HepG2 (cell line): ENCODE measurements at regions of chr15 and their contacts with region 1.

Region 1: DNA sequence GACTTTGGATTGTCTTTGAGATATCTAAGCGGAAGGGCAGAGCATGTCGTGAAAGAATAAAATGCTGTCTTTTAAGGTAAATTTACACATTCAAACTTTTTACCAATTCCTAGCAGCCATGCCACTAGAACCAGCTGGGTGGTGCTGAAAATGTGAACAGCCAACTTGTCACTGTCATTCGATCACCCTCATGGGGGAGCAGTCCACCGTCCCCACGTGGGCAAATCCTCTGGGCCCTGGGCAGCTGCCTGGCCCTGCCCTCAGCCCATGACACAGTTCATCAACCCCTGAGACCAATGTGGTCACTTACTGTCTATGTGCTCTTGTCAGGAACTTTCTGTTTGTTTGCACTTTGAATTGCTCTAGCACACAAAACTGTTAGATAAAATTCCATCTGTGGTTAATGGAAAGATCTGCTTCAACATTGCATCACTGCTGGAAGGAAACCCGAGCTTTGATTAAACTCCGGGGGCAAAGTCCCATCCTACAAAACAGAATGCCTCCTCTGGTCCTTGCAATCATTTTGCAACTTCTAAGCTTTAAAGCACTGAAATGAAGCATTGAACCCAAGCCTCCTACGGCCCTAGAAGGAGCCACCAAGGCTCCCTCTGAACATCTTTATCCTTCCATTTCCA is 50.1 kb downstream of the PCSK6 start:
- DNase-seq: peak; percentile 99
- ATAC-seq: peak; percentile 96
- H3K4me3 ChIP-seq: peak overlapping the region in 2 of 3 experiments; percentile 14 to 46; a peak in 2 of 6 replicates
- H3K27ac ChIP-seq: peak overlapping the region; percentile 93
- H3K4me1 ChIP-seq: peaks cover 77% of the 10 kb centered on the region
- H3K27me3 ChIP-seq: no peaks in the 10 kb centered on the region
- CTCF ChIP-seq: peak; percentile 79
- EP300 ChIP-seq: peak; percentile 88 to 99
- POLR2A ChIP-seq: peak; percentile 39 to 75; a peak in 3 of 4 replicates
- RAD21 ChIP-seq: peak; percentile 64

Region 2: DNA sequence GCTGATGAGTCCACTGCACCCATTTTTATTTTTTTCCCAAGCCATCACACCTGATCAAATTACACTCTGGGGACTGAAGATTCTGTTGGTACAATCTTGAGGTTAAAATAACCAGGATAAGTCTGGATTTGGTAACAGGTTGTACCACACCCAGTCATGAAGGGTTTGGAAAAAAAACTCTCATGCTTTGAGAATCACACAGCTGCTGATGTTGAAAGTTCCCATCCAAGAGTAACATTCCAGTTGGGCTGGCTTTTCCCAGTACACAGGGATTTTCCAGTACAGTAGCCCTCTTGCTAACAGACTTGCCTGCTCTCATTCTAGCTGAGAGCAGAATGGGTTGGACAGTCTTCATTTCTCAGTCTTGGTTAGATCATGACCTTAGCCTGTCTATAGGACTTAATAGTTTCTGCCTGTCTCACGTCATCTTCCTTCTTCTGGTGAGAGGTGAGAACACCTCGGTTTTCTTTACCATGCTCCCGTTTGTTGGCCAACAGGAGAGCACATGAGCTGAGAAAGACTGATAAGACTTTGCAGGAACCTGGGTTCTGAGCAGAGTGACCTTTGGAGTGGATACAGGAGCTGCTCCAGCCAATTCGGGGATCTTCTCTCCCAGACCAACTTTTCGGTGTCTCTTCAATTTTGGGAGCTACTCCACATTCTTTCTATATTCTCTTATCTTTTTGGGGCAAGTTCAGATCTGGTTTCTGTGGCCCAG is 1406.1 kb before region 1 on chr15:
- CTCF ChIA-PET with region 1: no interaction called
- POLR2A ChIA-PET with region 1: no interaction called
- in situ Hi-C with region 1: no loop called
- intact Hi-C with region 1: no loop called
- DNase-seq: no peak
- ATAC-seq: no peak
- H3K4me3 ChIP-seq: no peak overlapping the region
- H3K27ac ChIP-seq: no peak overlapping the region
- H3K4me1 ChIP-seq: no peaks in the 10 kb centered on the region
- H3K27me3 ChIP-seq: peaks cover 0 to 2% of the 10 kb centered on the region in 2 experiments; a peak in 3 of 5 replicates
- CTCF ChIP-seq: no peak
- EP300 ChIP-seq: no peak
- POLR2A ChIP-seq: no peak
- RAD21 ChIP-seq: no peak

Region 3: DNA sequence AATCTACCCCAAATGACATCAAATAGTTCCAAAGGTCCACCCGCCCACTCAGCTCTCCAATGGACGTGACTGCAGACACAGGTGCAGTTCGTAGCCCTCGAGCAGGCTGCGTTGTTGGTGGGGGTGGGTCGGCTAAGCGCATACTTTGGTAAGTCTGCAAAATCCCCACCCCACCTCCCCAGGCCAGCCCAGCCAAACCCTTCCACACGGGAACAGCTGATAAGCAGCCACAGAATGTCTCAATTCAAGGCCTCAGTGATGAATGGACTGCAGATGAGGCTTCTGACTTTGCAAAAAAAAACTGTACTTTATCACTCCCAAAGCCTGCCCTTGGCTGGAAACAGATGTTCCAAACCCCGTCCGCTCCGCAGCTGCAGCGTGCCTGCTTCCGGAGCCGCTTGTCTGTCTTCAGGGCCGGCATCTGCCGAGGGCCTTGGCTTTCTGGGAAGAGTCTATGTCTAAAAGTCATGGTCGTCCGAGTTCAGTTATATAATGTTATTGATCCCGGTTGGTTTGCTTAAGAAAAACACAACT is 11.9 kb after region 1 on chr15:
- CTCF ChIA-PET with region 1: no interaction called
- POLR2A ChIA-PET with region 1: interaction called, 32 read pairs
- in situ Hi-C with region 1: no loop called
- intact Hi-C with region 1: loop called (anchors 1 kb)
- DNase-seq: no peak
- ATAC-seq: no peak
- H3K4me3 ChIP-seq: no peak overlapping the region; a peak in 1 of 6 replicates
- H3K27ac ChIP-seq: peak overlapping the region; percentile 72
- H3K4me1 ChIP-seq: peaks cover 89% of the 10 kb centered on the region
- H3K27me3 ChIP-seq: no peaks in the 10 kb centered on the region
- CTCF ChIP-seq: no peak
- EP300 ChIP-seq: 0 out of 4 replicates have a peak, but pooled peaks of 1 of the 2 experiments have one; percentile 24
- POLR2A ChIP-seq: no peak
- RAD21 ChIP-seq: no peak

Region 4: DNA sequence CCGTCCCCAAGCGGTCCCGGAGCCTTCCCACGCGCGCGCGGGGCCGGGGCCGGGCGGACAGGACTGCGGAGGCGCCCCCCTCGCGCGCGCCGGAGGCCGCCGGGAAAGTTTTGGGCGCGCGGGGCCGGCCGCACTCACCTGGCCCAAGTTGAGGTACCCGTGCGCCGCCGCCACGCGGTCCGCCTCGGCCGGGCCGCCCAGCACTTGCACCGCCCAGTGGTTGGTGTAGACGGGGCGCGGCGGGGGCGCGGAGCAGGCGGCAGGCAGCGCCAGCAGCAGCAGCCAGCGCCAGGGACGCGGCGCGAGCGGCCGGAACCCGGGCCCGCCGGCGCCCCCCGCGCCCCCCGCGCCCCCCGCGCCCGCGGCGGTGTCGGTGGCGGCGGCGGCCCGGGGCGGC is 49.8 kb after region 1 on chr15:
- CTCF ChIA-PET with region 1: no interaction called
- POLR2A ChIA-PET with region 1: interaction called, 56 read pairs
- in situ Hi-C with region 1: loop called (anchors 5 kb)
- intact Hi-C with region 1: loop called (anchors 1 kb)
- DNase-seq: no peak
- ATAC-seq: peak; percentile 43
- H3K4me3 ChIP-seq: peak overlapping the region; percentile 62 to 83 (median 83); a peak in 4 of 6 replicates
- H3K27ac ChIP-seq: no peak overlapping the region
- H3K4me1 ChIP-seq: peaks cover 44% of the 10 kb centered on the region
- H3K27me3 ChIP-seq: no peaks in the 10 kb centered on the region
- CTCF ChIP-seq: peak; percentile 33; the same call in 1 of the 2 replicates
- EP300 ChIP-seq: no peak
- POLR2A ChIP-seq: no peak
- RAD21 ChIP-seq: peak; percentile 25

Region 5: GRCh38 chr15:101496198-101496986 is 57.0 kb after region 1 on chr15:
- CTCF ChIA-PET with region 1: interaction called, 4 read pairs
- POLR2A ChIA-PET with region 1: interaction called, 18 read pairs
- in situ Hi-C with region 1: no loop called
- intact Hi-C with region 1: no loop called
- DNase-seq: no peak
- ATAC-seq: peak; percentile 34
- H3K4me3 ChIP-seq: peak overlapping the region; percentile 73 to 88 (median 85)
- H3K27ac ChIP-seq: peak overlapping the region; percentile 10
- H3K4me1 ChIP-seq: peaks cover 68% of the 10 kb centered on the region
- H3K27me3 ChIP-seq: no peaks in the 10 kb centered on the region
- CTCF ChIP-seq: peak; percentile 42; the same call in 1 of the 2 replicates
- EP300 ChIP-seq: no peak
- POLR2A ChIP-seq: no peak; a peak in 1 of 4 replicates
- RAD21 ChIP-seq: no peak

Region 6: DNA sequence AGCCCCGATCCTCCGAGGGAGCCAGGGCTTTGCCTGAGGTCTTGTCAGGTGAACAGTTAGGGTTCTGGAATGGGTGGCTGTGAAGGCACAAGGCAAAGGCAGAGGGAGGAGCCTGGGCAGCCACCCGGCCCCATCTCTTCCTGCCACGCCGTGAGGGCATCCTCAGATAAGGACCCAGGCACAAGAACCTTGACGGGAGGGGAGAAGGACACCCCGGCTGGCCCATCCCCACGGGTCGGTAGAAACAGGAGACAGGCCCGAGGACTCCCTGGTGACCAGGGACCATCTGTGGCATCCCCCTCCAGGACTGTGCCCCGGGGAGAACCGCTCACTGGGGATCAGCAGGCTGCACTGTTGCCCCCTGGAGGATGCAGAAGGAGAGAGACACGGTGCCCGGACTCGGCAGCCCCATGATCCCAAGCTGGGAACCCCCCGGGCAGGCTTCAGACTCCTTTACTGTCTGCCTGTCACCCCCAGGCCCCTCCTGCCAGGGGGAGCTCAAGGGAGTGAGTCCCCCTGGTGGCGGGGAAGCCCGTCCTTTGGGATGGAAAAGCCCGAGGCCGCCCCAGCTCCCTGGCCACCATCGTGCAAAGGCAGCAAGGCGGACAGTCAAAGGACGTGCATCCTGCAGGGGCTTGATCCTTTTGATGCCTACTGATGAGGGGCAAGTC is 62.4 kb after region 1 on chr15:
- CTCF ChIA-PET with region 1: interaction called, 4 read pairs
- POLR2A ChIA-PET with region 1: interaction called, 18 read pairs
- in situ Hi-C with region 1: no loop called
- intact Hi-C with region 1: loop called (anchors 1 kb)
- DNase-seq: peak; percentile 66
- ATAC-seq: peak; percentile 88
- H3K4me3 ChIP-seq: peak overlapping the region; percentile 53 to 73 (median 62)
- H3K27ac ChIP-seq: no peak overlapping the region
- H3K4me1 ChIP-seq: peaks cover 71% of the 10 kb centered on the region
- H3K27me3 ChIP-seq: no peaks in the 10 kb centered on the region; a peak in 1 of 5 replicates
- CTCF ChIP-seq: peak; percentile 89
- EP300 ChIP-seq: no peak
- POLR2A ChIP-seq: no peak
- RAD21 ChIP-seq: peak; percentile 80

Region 7: DNA sequence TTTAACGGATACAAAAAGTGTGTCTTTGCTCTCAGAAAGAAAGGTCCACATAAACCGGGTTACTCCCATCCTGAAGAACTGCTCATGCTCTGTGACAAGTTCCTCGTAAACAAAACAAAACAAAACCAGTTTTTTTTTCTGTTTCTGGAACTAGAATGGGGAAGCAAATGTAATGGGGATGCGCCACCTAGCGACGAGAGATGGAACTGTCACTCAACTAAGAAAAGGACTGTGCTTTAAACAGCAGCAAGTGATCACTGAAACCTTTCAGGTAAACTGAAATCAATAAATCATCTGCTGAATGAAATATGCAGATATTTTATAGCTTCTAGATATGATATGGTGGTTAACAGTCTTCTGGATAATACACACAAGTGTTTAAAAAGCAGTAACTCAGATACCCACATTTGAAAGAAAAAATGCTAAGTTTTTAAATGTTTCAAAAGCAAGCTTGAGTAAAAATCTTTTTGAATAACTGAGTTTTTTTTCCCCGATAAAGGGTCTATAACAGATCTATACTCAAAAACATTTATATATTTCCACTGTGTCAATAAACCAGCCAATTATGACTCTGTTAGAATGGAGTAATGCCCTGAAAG is 201.9 kb after region 1 on chr15:
- CTCF ChIA-PET with region 1: no interaction called
- POLR2A ChIA-PET with region 1: no interaction called
- in situ Hi-C with region 1: loop called (anchors 10 kb)
- intact Hi-C with region 1: no loop called
- DNase-seq: peak; percentile 52
- ATAC-seq: peak; percentile 59
- H3K4me3 ChIP-seq: no peak overlapping the region
- H3K27ac ChIP-seq: no peak overlapping the region
- H3K4me1 ChIP-seq: peaks cover 36% of the 10 kb centered on the region
- H3K27me3 ChIP-seq: no peaks in the 10 kb centered on the region
- CTCF ChIP-seq: peak; percentile 89
- EP300 ChIP-seq: no peak
- POLR2A ChIP-seq: no peak
- RAD21 ChIP-seq: peak; percentile 84

Region 8: DNA sequence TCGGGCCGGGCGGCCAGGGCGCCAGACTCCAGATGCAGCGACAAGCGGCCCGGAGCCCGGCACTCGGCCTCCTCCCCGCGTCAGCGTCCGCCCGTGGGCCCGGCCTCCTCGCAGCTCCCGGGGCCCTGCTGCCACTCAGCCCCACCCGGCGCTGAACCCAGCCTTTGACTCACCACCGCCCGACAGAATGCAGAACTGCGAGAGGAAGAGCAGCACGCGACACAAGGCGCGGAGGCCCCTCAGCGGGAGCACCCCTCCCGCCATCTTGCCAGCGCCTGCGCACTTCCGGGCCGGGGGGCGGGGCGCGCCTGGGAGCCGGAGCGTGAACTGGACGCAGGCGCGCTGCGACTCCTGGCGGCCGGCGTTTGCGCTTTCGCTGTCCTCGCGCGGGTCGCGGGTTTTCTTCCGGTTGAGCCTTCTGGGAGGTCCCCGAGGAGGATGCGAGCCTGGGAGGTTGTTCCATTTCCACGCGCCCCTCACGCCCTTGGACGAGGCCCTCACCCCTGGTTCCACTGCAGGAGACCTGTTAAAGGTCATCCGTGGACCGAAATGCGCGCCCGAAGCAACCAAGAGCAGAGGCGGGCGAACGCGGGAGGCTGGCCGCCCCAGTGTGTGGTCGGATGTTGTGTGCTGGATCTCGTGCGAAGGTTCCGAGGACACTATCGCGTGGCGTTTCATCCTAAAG is 212.8 kb after region 1 on chr15 and contains the start of gene TM2D3:
- CTCF ChIA-PET with region 1: no interaction called
- POLR2A ChIA-PET with region 1: interaction called, 3 read pairs
- in situ Hi-C with region 1: loop called (anchors 10 kb)
- intact Hi-C with region 1: loop called (anchors 5 kb)
- DNase-seq: peak; percentile 80
- ATAC-seq: peak; percentile 95
- H3K4me3 ChIP-seq: peak within 1 kb of the TSS; percentile 72 to 91 (median 80)
- H3K27ac ChIP-seq: peak within 1 kb of the TSS; percentile 80
- H3K4me1 ChIP-seq: peaks cover 35% of the 10 kb centered on the region
- H3K27me3 ChIP-seq: no peaks in the 10 kb centered on the region; a peak in 1 of 5 replicates
- CTCF ChIP-seq: peak; percentile 91
- EP300 ChIP-seq: peak in 1 of 2 experiments; percentile 13; a peak in 1 of 4 replicates
- POLR2A ChIP-seq: peak; percentile 82 to 94
- RAD21 ChIP-seq: peak; percentile 88
- total RNA-seq, gene TM2D3: 17.8 and 31.1 TPM in 2 replicates